Mammary epithelial cell (primary cell): ENCODE measurements at regions of chr17 and their contacts with region 1.

Region 1: GRCh38 chr17:69335058-69335457 is 8.1 kb upstream of the ABCA5 start:
- DNase-seq: peak; percentile 51
- H3K4me3 ChIP-seq: no peak overlapping the region
- H3K27ac ChIP-seq: no peak overlapping the region
- H3K4me1 ChIP-seq: no peaks in the 10 kb centered on the region
- H3K27me3 ChIP-seq: no peaks in the 10 kb centered on the region
- CTCF ChIP-seq: peak; percentile 38 to 74

Region 2: GRCh38 chr17:69388822-69389442 is 53.9 kb after region 1 on chr17:
- CTCF ChIA-PET with region 1: no interaction called
- dilution Hi-C with region 1: no loop called
- in situ Hi-C with region 1: no loop called
- intact Hi-C with region 1: loop called (anchors 2 kb)
- DNase-seq: no peak
- H3K4me3 ChIP-seq: no peak overlapping the region
- H3K27ac ChIP-seq: no peak overlapping the region
- H3K4me1 ChIP-seq: no peaks in the 10 kb centered on the region
- H3K27me3 ChIP-seq: no peaks in the 10 kb centered on the region
- CTCF ChIP-seq: no peak